ENCODE measurements at regions of chr4 and their contacts with region 1.

Region 1: GRCh38 chr4:162506253-162506652 is 342.5 kb upstream of the FSTL5 start:
- DNase-seq: no peak
- H3K4me3 ChIP-seq: no peak overlapping the region
- H3K27ac ChIP-seq: no peak overlapping the region
- H3K4me1 ChIP-seq: no peaks in the 10 kb centered on the region
- H3K27me3 ChIP-seq: no peaks in the 10 kb centered on the region
- CTCF ChIP-seq: no peak
- POLR2A ChIP-seq: no peak

Region 2: GRCh38 chr4:162622664-162623063 is 116.4 kb after region 1 on chr4:
- intact Hi-C with region 1: no loop called
- DNase-seq: no peak
- H3K4me3 ChIP-seq: no peak overlapping the region
- H3K27ac ChIP-seq: no peak overlapping the region
- H3K4me1 ChIP-seq: no peaks in the 10 kb centered on the region
- H3K27me3 ChIP-seq: no peaks in the 10 kb centered on the region
- CTCF ChIP-seq: no peak
- POLR2A ChIP-seq: no peak

Region 3: GRCh38 chr4:163042306-163042705 is 536.1 kb after region 1 on chr4:
- intact Hi-C with region 1: loop called (anchors 10 kb)
- DNase-seq: no peak
- H3K4me3 ChIP-seq: no peak overlapping the region
- H3K27ac ChIP-seq: no peak overlapping the region
- H3K4me1 ChIP-seq: no peaks in the 10 kb centered on the region
- H3K27me3 ChIP-seq: no peaks in the 10 kb centered on the region
- CTCF ChIP-seq: no peak
- POLR2A ChIP-seq: no peak

Measured in esophagus squamous epithelium (tissue), 5 donors.